ENCODE measurements at regions of chr11 and their contacts with region 1.

Region 1: GRCh38 chr11:7892840-7893254 is 38.2 kb downstream of the OR10A6 start:
- DNase-seq: no peak

Region 2: DNA sequence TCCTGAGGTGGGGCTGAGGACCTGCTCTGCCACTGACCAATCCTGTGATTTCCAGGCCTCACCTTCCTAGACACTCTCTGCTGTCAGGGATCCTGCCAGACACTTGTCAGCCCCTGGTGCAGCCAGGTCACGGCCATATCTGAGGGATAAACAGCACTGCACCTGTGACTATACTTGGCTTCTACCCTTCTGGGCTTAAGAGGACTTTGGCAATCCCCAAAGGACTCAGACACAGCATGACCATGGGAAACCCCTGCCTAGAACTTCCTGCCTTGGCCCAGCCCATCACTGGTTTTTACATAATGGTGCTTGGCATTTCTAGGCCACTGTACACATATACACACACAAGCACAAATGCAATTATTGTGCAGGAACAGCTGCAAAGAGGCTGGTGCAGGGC is 419.1 kb before region 1 on chr11:
- intact Hi-C with region 1: no loop called
- DNase-seq: no peak

Region 3: DNA sequence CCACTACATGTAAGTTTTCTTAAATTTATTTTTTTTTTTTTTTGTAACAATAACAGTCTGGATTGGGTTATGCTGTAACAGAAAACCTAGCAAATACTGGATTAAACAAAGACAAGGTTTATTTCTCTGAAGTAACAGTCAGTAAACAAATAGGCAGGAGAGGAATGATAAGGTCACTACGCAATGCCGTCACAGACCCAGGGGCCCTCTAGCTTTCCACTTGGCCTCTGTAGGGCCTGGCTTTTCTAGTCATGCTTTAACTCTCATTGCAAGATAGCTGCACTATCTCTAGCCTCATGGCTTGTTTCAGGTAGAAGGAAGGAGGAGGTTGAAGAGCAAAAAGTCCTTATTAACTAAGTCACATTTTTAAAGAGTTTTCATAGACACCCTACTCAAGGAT is 31.7 kb after region 1 on chr11:
- intact Hi-C with region 1: no loop called
- DNase-seq: no peak

Region 4: GRCh38 chr11:8080674-8081590 is 188.1 kb after region 1 on chr11 and contains the start of gene TUB:
- intact Hi-C with region 1: loop called (anchors 10 kb)
- DNase-seq: peak in 7 of 10 donors; percentile 36 to 92 (median 51)